ENCODE measurements at regions of chr7 and their contacts with region 1.

Region 1: GRCh38 chr7:102279537-102280400 is 6.9 kb upstream of the SH2B2 start:
- DNase-seq: peak; percentile 36 to 48
- ATAC-seq: peak; percentile 65 to 90 (median 82)
- H3K4me3 ChIP-seq: no peak overlapping the region
- H3K27ac ChIP-seq: no peak overlapping the region
- H3K4me1 ChIP-seq: peaks cover 0 to 12% (median 1%) of the 10 kb centered on the region in 9 donors
- H3K27me3 ChIP-seq: no peaks in the 10 kb centered on the region
- CTCF ChIP-seq: peak; percentile 57 to 91 (median 88)

Region 2: GRCh38 chr7:100874577-100875355 is 1405.0 kb before region 1 on chr7 and contains the start of gene SRRT:
- intact Hi-C with region 1: loop called in 1 of 10 experiments (anchors 10 kb)
- DNase-seq: peak; percentile 99
- ATAC-seq: peak; percentile 94 to 99 (median 98)
- H3K4me3 ChIP-seq: peak within 1 kb of the TSS; percentile 77 to 97 (median 87)
- H3K27ac ChIP-seq: peak within 1 kb of the TSS; percentile 86 to 97 (median 95)
- H3K4me1 ChIP-seq: peaks cover 2 to 50% (median 40%) of the 10 kb centered on the region in 9 donors
- H3K27me3 ChIP-seq: no peaks in the 10 kb centered on the region
- CTCF ChIP-seq: peak; percentile 35 to 55 (median 48)
- total RNA-seq, gene SRRT: 38.4 to 69.5 (median 49.6) TPM

Region 3: GRCh38 chr7:102390697-102391484 is 111.1 kb after region 1 on chr7:
- intact Hi-C with region 1: loop called in 9 of 10 experiments (anchors 1 to 5 kb)
- DNase-seq: peak; percentile 78 to 81
- ATAC-seq: peak; percentile 74 to 84 (median 82)
- H3K4me3 ChIP-seq: no peak overlapping the region
- H3K27ac ChIP-seq: no peak overlapping the region
- H3K4me1 ChIP-seq: peaks cover 0 to 8% (median 6%) of the 10 kb centered on the region in 9 donors
- H3K27me3 ChIP-seq: no peaks in the 10 kb centered on the region
- CTCF ChIP-seq: peak; percentile 82 to 96 (median 93)

Region 4: DNA sequence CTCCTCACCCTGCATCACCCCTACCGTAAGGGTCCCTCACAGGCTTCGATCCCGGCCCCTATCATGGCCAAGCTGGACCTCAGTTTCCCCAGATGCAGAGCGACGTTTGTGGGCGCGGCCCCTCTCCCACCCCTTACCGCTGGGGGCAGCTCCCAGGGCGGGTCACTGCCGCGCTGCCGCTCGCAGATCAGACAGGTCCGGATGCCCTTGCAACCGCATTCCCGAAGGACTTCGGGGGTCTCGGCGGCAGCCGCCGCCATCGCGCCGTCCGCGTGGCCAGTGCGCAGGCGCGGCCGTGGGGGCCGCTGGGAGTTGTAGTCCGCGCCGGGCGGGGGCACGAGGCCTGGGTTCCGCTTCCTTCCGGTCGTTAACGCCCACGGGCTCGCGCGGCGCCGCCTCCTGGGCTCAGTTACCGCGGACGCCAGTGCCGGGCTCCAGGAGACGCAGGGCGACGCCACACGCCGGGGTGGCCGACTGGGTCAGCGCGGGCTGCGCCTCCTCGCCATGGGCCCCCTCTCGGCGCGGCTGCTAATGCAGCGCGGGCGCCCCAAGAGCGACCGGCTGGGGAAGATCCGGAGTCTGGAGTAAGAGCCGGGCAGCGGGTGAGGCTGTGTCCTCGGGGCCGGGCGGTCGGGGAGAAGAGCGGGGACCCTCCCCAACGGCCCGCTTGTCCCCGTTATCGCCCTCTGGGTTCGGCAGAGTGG is 185.0 kb after region 1 on chr7 and contains the starts of genes ALKBH4 and LRWD1:
- intact Hi-C with region 1: loop called in 1 of 10 experiments (anchors 10 kb)
- DNase-seq: peak; percentile 94 to 96
- ATAC-seq: peak; percentile 93 to 98 (median 96)
- H3K4me3 ChIP-seq: peak within 1 kb of the TSS; percentile 74 to 100 (median 91)
- H3K27ac ChIP-seq: peak within 1 kb of the TSS in 9 of 10 donors; percentile 53 to 94 (median 82)
- H3K4me1 ChIP-seq: peaks cover 4 to 26% (median 23%) of the 10 kb centered on the region in 9 donors
- H3K27me3 ChIP-seq: no peaks in the 10 kb centered on the region
- CTCF ChIP-seq: peak in 7 of 9 donors; percentile 17 to 51 (median 36)
- total RNA-seq, gene ALKBH4: 4.4 to 8.6 (median 6.2) TPM
- total RNA-seq, gene LRWD1: 8.1 to 12.2 (median 9.5) TPM

Measured in heart right ventricle (tissue), 16 donors.